ENCODE measurements at regions of chr12 and their contacts with region 1.

Region 1: GRCh38 chr12:107912421-107913004 is 138.0 kb downstream of the ASCL4 start:
- DNase-seq: peak; percentile 85
- ATAC-seq: peak; percentile 92
- H3K4me3 Mint-ChIP-seq: peak overlapping the region; percentile 64
- H3K27ac Mint-ChIP-seq: no peak overlapping the region
- H3K4me1 Mint-ChIP-seq: peaks cover 3% of the 10 kb centered on the region
- H3K27me3 Mint-ChIP-seq: peaks cover 31% of the 10 kb centered on the region

Region 2: GRCh38 chr12:107891972-107892371 is 20.5 kb before region 1 on chr12:
- CTCF ChIA-PET with region 1: interaction called, 4 read pairs
- POLR2A ChIA-PET with region 1: no interaction called
- intact Hi-C with region 1: loop called in 1 of 2 experiments (anchors 2 kb)
- DNase-seq: no peak
- ATAC-seq: no peak
- H3K4me3 Mint-ChIP-seq: no peak overlapping the region
- H3K27ac Mint-ChIP-seq: no peak overlapping the region
- H3K4me1 Mint-ChIP-seq: no peaks in the 10 kb centered on the region
- H3K27me3 Mint-ChIP-seq: peaks cover 6% of the 10 kb centered on the region

Region 3: DNA sequence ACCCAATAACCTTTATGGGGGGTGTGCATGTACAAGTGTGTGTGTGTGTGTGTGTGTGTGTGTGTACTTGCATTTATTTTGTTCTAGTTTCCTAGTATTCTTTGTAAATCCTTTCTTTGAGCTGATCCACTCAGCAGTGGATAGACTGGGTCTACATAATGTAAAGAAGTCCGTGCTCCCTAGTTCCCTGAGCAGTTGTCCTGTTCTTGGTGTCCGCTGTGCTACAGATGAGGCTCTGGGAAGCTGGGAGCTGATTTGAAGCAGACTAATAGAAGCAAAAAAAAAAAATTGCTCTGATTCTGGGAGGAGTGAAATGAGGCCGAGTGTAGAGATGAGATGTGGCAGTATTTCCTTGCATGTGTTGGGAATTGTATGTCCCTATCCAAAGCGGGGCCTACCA is 66.1 kb after region 1 on chr12:
- CTCF ChIA-PET with region 1: no interaction called
- POLR2A ChIA-PET with region 1: no interaction called
- intact Hi-C with region 1: no loop called
- DNase-seq: no peak
- ATAC-seq: no peak
- H3K4me3 Mint-ChIP-seq: no peak overlapping the region
- H3K27ac Mint-ChIP-seq: no peak overlapping the region
- H3K4me1 Mint-ChIP-seq: no peaks in the 10 kb centered on the region
- H3K27me3 Mint-ChIP-seq: peaks cover 26% of the 10 kb centered on the region

Region 4: GRCh38 chr12:108305520-108305919 is 393.0 kb after region 1 on chr12:
- CTCF ChIA-PET with region 1: no interaction called
- POLR2A ChIA-PET with region 1: no interaction called
- intact Hi-C with region 1: no loop called
- DNase-seq: peak; percentile 58
- ATAC-seq: peak; percentile 73
- H3K4me3 Mint-ChIP-seq: no peak overlapping the region
- H3K27ac Mint-ChIP-seq: no peak overlapping the region
- H3K4me1 Mint-ChIP-seq: peaks cover 20% of the 10 kb centered on the region
- H3K27me3 Mint-ChIP-seq: peaks cover 7% of the 10 kb centered on the region

Measured in activated CD4-positive, alpha-beta T cell treated with anti-CD3 and anti-CD28 coated beads for 36 hours (primary cell).